Activated T-helper 1 cell treated with anti-CD3 and anti-CD28 coated beads, Interleukin-12 subunit alpha, Interleukin-12 subunit beta, Interleukin-2, Interleukin-4 antibody, amounts not matched to agents 30 ng/mL and 10 ng/mL and 1 ng/mL, durations not matched to agents 14 hours and 24 hours and 36 hours (primary cell): ENCODE measurements at regions of chr12 and their contacts with region 1.

Region 1: DNA sequence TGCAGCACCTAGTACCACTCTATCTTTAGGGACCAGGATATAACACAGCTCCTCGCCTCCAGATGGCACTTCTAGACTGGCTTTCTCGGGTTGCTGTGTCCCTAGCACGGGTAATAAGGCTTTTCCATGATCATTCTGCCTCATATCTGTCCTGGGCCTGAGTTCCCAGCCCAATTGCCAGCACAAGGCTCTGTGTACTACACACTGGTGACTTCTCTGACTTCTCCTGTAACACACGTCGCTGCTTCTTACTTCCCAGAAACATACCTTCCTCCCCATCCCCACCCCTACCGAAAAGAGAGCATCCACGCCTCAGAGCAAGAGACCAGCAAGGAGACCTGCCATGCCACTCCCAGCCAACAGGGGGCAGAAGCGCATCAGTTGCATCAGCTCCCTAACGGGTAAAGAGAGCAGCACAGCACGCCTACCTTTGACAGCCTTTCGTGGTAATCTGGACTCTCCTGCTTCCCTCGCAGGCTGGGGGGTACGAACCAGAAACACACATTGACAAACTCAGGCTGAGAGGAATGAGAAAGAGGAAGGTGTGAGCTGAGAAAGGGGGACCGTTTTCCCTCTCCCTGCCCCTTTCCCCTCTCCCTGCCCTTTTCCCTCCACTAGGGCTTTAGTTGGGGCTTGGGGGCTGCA is 21.2 kb upstream of the ZNF740 start:
- DNase-seq: peak; percentile 83
- H3K4me3 Mint-ChIP-seq: no peak overlapping the region
- H3K27ac Mint-ChIP-seq: peak overlapping the region; percentile 50
- H3K4me1 Mint-ChIP-seq: peaks cover 10% of the 10 kb centered on the region
- H3K27me3 Mint-ChIP-seq: no peaks in the 10 kb centered on the region

Region 2: DNA sequence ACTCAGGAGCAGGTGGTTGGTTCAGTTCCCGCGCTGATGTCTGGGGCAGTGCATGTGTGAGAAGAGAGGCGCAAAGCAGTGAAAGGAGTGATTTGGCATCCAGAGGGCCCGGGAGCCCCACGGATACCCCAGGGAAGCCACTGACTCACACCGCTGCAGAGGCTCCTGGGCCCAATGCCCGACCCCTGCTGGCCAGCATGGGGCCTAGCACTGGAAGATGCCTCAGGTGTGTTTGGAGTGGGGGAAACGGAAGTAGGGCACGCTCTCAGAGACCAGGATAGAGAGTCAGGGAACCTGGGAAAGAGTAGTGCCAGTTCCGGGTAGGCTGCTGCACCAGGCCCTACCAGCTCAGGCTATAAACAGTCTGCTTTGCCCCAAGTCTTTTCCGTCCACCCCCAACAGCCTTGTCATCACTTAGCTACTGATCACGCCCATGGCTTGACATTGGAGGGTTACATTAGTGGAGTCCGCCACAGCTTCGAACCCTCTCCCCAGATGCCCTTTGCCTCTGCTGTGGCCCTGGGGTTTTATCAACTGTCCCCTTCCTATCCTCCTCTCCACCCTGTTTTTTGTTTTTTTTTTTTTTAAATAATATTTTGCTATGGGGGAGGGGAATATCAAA is 30.9 kb after region 1 on chr12:
- intact Hi-C with region 1: loop called (anchors 1 kb)
- DNase-seq: no peak
- H3K4me3 Mint-ChIP-seq: no peak overlapping the region
- H3K27ac Mint-ChIP-seq: no peak overlapping the region
- H3K4me1 Mint-ChIP-seq: peaks cover 14% of the 10 kb centered on the region
- H3K27me3 Mint-ChIP-seq: no peaks in the 10 kb centered on the region

Region 3: GRCh38 chr12:53205747-53206419 is 46.6 kb after region 1 on chr12:
- intact Hi-C with region 1: loop called (anchors 1 kb)
- DNase-seq: peak; percentile 74
- H3K4me3 Mint-ChIP-seq: peak overlapping the region; percentile 82
- H3K27ac Mint-ChIP-seq: peak overlapping the region; percentile 90
- H3K4me1 Mint-ChIP-seq: peaks cover 67% of the 10 kb centered on the region
- H3K27me3 Mint-ChIP-seq: no peaks in the 10 kb centered on the region

Region 4: DNA sequence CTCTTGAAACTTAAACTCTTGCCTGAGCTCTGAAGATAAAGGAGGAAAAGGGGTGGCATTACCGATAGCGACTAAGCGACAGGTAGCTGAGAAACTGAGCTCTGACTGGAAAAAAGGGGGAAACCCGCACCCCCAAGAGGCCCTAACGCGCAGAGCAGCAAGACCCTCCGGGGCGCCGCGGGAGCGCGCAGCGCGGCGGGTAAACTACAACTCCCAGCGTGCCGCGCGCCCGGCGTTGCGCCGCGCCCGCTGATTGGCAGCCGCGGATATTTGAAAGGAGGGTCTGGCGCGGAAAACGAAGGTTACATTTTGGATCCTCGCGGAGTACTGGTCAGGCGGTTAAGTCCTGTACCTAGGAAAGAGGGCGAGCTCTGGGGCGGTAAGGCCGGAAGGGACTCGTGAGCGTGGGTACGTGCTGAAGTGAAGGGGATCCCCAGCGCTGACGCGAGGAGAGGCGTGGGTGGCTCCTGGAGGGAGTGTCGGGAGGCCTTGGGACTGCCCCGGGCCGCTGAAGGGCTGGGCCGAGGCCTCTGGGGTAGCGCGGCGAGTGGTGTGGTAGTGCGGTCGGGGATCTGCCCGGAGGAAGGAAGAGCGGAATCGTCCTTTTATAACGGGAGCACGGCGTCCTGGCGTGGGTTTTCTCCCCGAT is 108.8 kb after region 1 on chr12 and contains the start of gene ESPL1:
- intact Hi-C with region 1: loop called (anchors 1 kb)
- DNase-seq: peak; percentile 81
- H3K4me3 Mint-ChIP-seq: peak within 1 kb of the TSS; percentile 90
- H3K27ac Mint-ChIP-seq: peak within 1 kb of the TSS; percentile 88
- H3K4me1 Mint-ChIP-seq: peaks cover 43% of the 10 kb centered on the region
- H3K27me3 Mint-ChIP-seq: no peaks in the 10 kb centered on the region
- total RNA-seq, gene ESPL1: 61.2 and 68.4 TPM in 2 replicates

Region 5: DNA sequence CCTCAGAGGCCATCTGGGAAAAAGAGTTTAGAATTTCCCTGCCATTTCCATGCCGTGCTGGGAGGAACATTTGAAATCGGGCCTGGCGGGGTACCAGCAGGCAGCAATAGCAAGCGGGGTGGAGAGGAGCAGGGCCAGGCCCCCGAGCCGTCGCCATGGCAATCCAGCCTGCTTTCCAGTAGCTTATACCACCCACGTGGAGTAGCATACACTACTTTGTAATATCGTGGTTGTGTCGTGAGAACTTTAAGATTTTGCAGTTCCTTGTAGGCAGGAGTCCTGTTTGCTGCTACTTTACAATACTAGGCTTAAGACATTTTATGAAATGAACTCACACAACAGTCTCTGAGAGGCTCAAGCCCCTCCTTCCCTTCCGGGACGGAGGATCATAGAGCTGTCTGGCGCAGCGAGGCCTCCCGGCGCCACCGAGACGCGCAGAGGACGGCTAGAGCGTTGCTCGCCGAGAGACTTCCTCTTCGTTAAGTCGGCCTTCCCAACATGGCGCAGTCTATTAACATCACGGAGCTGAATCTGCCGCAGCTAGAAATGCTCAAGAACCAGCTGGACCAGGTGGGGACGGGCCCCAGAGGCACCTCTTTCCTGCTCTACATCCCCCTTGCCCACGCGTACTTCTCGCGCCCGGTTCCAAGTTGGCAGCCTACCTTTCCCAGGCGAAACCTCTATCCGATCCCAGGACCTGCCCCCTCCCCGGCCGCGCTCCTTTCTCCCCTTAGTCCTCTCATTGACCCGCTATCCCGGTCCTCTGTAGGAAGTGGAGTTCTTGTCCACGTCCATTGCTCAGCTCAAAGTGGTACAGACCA is 136.0 kb after region 1 on chr12 and contains the start of gene PFDN5:
- intact Hi-C with region 1: loop called (anchors 1 kb)
- DNase-seq: peak; percentile 86
- H3K4me3 Mint-ChIP-seq: peak within 1 kb of the TSS; percentile 99
- H3K27ac Mint-ChIP-seq: peak within 1 kb of the TSS; percentile 91
- H3K4me1 Mint-ChIP-seq: peaks cover 50% of the 10 kb centered on the region
- H3K27me3 Mint-ChIP-seq: no peaks in the 10 kb centered on the region
- total RNA-seq, gene PFDN5: 344 and 350 TPM in 2 replicates

Region 6: GRCh38 chr12:53427905-53428594 is 268.7 kb after region 1 on chr12:
- intact Hi-C with region 1: loop called (anchors 10 kb)
- DNase-seq: no peak
- H3K4me3 Mint-ChIP-seq: no peak overlapping the region
- H3K27ac Mint-ChIP-seq: no peak overlapping the region
- H3K4me1 Mint-ChIP-seq: peaks cover 9% of the 10 kb centered on the region
- H3K27me3 Mint-ChIP-seq: no peaks in the 10 kb centered on the region

Region 7: DNA sequence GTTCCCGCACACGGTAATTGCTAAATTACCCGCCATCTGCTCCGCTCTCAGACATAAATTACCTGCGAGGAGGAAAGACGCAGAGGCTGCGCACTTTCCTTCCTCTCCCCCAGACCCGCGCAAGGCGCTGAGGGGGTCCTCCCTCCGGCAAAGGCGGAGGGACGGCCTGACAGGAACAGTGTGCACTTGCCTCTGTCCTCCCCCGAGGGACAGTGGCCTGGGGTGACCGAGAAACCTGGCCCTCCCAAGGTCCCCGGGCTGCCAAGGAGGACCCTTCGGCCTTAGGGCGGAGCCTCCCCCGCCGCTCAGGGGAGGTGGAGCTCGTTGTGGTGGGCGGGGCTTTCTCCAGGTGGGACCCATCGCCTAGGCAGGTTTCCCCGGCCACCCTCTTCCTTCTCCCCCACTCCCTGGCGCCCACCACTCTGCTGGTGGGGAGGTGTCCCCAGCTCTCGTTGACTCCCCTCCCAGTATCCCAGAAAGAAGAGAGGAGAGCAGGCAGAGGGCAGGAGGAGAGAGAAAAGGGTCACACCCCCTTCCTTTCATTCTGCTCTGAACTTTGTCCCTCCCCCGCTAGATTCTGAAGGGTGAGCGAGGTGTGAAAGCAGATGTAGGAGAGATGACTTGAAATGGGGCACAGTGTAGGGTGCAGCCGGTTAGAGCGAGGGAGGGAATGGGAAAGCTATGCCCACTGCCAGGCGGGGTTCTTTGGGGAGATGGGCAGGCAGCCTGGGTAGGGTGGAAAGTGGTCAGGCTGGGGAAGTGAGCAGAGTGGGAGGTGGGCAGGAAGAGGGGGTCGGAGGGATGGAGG is 579.3 kb after region 1 on chr12:
- intact Hi-C with region 1: no loop called
- DNase-seq: no peak
- H3K4me3 Mint-ChIP-seq: no peak overlapping the region
- H3K27ac Mint-ChIP-seq: no peak overlapping the region
- H3K4me1 Mint-ChIP-seq: peaks cover 20% of the 10 kb centered on the region
- H3K27me3 Mint-ChIP-seq: peaks cover 56% of the 10 kb centered on the region